ENCODE measurements at regions of chr4 and their contacts with region 1.

Region 1: DNA sequence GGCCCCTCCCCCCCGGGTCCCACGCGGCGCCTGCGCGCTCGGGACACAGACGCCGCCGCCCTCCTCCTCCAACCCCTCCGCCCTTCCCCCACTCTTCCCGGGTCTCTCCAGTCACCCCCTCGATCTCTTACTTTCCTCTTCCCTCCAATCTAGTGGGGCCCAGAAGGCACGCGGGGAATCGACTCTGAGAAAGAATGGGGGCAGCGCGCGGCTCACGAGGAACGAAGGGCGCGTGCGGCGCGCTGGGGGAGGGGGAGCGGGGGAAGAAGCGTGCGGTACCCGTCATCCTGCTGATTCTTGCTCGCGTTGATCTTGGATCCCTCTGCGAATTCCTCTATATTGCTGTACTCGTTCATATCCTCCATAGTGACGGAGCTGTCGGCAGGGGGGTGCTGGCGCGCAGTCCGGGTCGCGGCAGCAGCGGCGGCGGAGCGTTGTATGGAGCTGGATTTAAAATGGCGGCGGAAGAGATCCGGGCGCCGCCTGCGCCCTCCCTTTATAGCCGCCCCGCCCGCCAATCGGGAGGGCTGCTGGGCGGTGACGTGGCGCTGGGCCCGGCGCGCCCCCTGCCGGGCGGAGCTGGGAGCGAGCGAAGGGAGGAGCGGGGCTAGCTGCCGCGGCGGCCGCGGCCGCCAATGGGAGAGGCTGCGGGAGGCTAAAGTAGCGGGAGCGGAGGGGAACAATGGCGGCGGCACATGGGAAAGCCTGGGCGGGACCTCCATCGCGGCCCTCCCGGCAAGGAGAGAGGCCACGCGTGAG is 1.1 kb downstream of the HNRNPDL start:
- DNase-seq: peak; percentile 76
- ATAC-seq: peak; percentile 73
- H3K4me3 ChIP-seq: peak overlapping the region; percentile 79 to 99 (median 97)
- H3K27ac ChIP-seq: peak overlapping the region; percentile 100
- H3K4me1 ChIP-seq: peaks cover 51% of the 10 kb centered on the region
- H3K27me3 ChIP-seq: no peaks in the 10 kb centered on the region; a peak in 1 of 5 replicates
- CTCF ChIP-seq: peak; percentile 84
- EP300 ChIP-seq: 0 out of 4 replicates have a peak, but pooled peaks of 1 of the 2 experiments have one; percentile 15
- POLR2A ChIP-seq: peak in 1 of 2 experiments; percentile 93; a peak in 2 of 4 replicates
- RAD21 ChIP-seq: no peak; the same call in 1 of the 2 replicates

Region 2: GRCh38 chr4:82284858-82285805 is 144.0 kb before region 1 on chr4:
- CTCF ChIA-PET with region 1: no interaction called
- POLR2A ChIA-PET with region 1: interaction called, 12 read pairs
- in situ Hi-C with region 1: no loop called
- intact Hi-C with region 1: loop called (anchors 10 kb)
- DNase-seq: peak; percentile 98
- ATAC-seq: peak; percentile 100
- H3K4me3 ChIP-seq: peak overlapping the region; percentile 55 to 62 (median 55)
- H3K27ac ChIP-seq: peak overlapping the region; percentile 18
- H3K4me1 ChIP-seq: peaks cover 33% of the 10 kb centered on the region
- H3K27me3 ChIP-seq: no peaks in the 10 kb centered on the region
- CTCF ChIP-seq: peak; percentile 82
- EP300 ChIP-seq: no peak
- POLR2A ChIP-seq: no peak
- RAD21 ChIP-seq: 0 out of 2 replicates have a peak, but pooled peaks have one; percentile 27

Region 3: DNA sequence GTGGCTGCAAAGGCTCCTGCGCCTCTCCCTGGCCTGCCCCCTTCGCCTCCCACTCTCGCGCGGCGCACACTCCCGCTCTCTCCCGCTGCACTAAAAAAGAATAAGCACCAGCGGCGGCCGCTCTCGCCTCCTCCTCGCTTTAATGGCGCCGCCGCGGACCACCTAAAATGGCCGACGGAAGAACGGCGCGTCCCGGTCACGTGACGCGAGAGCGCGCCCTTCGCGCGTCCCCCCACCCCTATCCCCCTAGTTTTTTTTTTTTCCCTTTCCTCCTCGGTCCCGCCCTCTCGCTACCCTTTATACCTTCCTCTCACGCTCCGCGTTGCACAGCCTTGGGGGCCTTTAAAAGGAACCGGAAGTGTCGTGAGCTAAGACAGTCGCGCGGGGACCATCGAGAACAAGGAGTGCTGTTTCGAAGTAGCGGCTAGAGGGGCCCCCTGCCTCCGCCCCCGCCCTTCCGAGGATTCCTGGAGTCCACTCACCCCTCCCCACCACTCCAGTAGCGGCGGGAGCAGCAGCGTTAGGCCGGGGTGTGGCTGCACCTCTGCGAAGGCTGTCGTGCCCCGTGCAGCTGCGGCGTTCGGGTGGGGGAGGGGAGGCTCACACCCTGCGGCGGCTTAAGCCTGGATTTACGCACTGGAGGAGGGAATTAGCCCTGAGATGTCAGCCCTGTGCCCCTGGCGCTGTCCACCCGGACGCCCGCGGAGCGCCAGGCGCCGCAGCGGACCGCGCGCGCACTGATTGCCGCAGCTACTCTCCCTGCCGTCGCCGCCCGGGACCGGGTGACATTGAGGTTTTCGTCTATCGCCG is 55.1 kb before region 1 on chr4 and contains the start of gene HNRNPD:
- CTCF ChIA-PET with region 1: no interaction called
- POLR2A ChIA-PET with region 1: interaction called, 52 read pairs
- in situ Hi-C with region 1: no loop called
- intact Hi-C with region 1: loop called (anchors 1 kb)
- DNase-seq: peak; percentile 99
- ATAC-seq: peak; percentile 93
- H3K4me3 ChIP-seq: peak within 1 kb of the TSS; percentile 89 to 100 (median 98)
- H3K27ac ChIP-seq: peak within 1 kb of the TSS; percentile 99
- H3K4me1 ChIP-seq: peaks cover 31% of the 10 kb centered on the region
- H3K27me3 ChIP-seq: peaks cover 0 to 3% of the 10 kb centered on the region in 2 experiments; a peak in 1 of 5 replicates
- CTCF ChIP-seq: no peak; the same call in 1 of the 2 replicates
- EP300 ChIP-seq: peak; percentile 44 to 87; a peak in 3 of 4 replicates
- POLR2A ChIP-seq: peak; percentile 74 to 85
- RAD21 ChIP-seq: peak; percentile 73
- total RNA-seq, gene HNRNPD: 64.0 and 156 TPM in 2 replicates

Measured in HepG2 (cell line).